ENCODE measurements at regions of chr7 and their contacts with region 1.

Region 1: GRCh38 chr7:75599244-75599781 is 107.2 kb downstream of the SPDYE5 start:
- DNase-seq: no peak
- ATAC-seq: peak; percentile 76
- H3K4me3 ChIP-seq: no peak overlapping the region
- H3K27ac ChIP-seq: peak overlapping the region in 1 of 2 donors; percentile 26
- H3K4me1 ChIP-seq: peaks cover 0 to 5% of the 10 kb centered on the region in 2 donors
- H3K27me3 ChIP-seq: no peaks in the 10 kb centered on the region

Region 2: GRCh38 chr7:75534727-75535307 is 64.5 kb before region 1 on chr7:
- intact Hi-C with region 1: loop called in 1 of 2 experiments (anchors 10 kb)
- DNase-seq: no peak
- ATAC-seq: no peak
- H3K4me3 ChIP-seq: no peak overlapping the region
- H3K27ac ChIP-seq: no peak overlapping the region
- H3K4me1 ChIP-seq: no peaks in the 10 kb centered on the region
- H3K27me3 ChIP-seq: no peaks in the 10 kb centered on the region

Region 3: DNA sequence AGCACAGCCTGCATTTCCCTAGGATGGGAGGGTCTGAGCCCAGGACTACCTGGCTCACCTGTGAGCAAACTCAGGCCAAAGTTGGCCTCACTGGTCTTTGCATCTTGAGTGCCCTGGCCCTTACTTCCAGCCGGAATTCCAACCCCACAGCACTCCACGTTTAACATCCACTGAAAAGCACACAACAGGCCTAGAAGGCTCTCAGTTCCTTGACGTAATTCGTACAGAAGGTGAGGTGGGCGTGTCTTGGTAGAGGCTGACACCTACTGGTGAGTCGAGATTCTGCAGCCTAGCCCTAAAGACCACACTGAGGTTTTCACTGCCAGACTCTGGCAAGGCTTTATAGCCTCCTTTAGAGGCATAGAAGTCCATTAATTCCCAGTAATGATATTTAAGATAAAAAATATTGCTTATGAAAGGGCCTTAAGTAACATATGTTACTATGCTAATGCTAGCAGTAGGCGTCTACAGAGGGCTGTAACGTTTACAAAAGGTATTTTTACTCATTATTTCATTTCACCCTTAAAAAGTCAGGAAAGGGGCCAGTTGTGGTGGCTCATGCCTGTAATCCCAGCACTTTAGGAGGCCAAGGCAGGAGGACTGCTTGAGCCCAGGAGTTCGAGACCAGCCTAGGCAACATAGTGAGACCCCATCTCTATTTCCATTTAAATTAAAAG is 43.6 kb after region 1 on chr7:
- intact Hi-C with region 1: loop called in 1 of 2 experiments (anchors 10 kb)
- DNase-seq: peak in 1 of 2 donors; percentile 58
- ATAC-seq: no peak
- H3K4me3 ChIP-seq: no peak overlapping the region
- H3K27ac ChIP-seq: no peak overlapping the region
- H3K4me1 ChIP-seq: no peaks in the 10 kb centered on the region
- H3K27me3 ChIP-seq: no peaks in the 10 kb centered on the region

Region 4: GRCh38 chr7:75762314-75762917 is 163.1 kb after region 1 on chr7:
- intact Hi-C with region 1: loop called in 1 of 2 experiments (anchors 10 kb)
- DNase-seq: no peak
- ATAC-seq: no peak
- H3K4me3 ChIP-seq: no peak overlapping the region
- H3K27ac ChIP-seq: no peak overlapping the region
- H3K4me1 ChIP-seq: no peaks in the 10 kb centered on the region
- H3K27me3 ChIP-seq: no peaks in the 10 kb centered on the region

Region 5: GRCh38 chr7:75866489-75867389 is 267.4 kb after region 1 on chr7:
- intact Hi-C with region 1: no loop called
- DNase-seq: peak; percentile 78
- ATAC-seq: peak; percentile 88
- H3K4me3 ChIP-seq: no peak overlapping the region
- H3K27ac ChIP-seq: no peak overlapping the region
- H3K4me1 ChIP-seq: no peaks in the 10 kb centered on the region
- H3K27me3 ChIP-seq: no peaks in the 10 kb centered on the region

Measured in aorta (tissue), 5 donors.